ENCODE measurements at regions of chr10 and their contacts with region 1.

Region 1: GRCh38 chr10:97334370-97335175 is at the start of gene FRAT2:
- DNase-seq: peak; percentile 95 to 96
- ATAC-seq: peak; percentile 98
- H3K4me3 ChIP-seq: peak within 1 kb of the TSS; percentile 65 to 82
- H3K27ac ChIP-seq: peak within 1 kb of the TSS in 1 of 2 donors; percentile 70
- H3K4me1 ChIP-seq: no peaks in the 10 kb centered on the region
- H3K27me3 ChIP-seq: no peaks in the 10 kb centered on the region
- total RNA-seq, gene FRAT2: 5.5 to 8.6 TPM

Region 2: DNA sequence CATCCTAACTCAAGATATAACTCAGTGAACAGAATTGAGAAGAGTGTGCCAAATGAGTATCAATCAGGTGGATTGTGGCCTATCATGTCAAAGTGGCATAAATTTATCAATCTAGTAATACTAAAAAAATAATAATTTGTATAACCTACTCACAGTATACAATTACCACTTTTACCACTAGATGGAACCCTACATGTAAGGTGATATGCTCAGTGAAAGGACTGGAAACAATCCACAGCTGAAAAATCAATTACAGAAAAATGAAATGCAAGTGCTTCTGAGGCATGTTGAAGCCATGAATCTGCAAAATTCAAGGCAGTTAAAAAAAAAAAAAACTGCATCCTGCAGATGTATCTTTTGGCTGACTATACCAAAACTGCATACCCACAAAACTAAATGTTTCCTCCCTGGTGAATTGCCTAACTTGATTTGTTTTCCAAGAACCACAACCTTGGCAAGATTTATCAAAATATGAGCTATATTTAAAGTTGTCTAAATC is 56.0 kb before region 1 on chr10:
- intact Hi-C with region 1: loop called (anchors 5 to 10 kb)
- DNase-seq: no peak
- ATAC-seq: peak; percentile 91
- H3K4me3 ChIP-seq: no peak overlapping the region
- H3K27ac ChIP-seq: no peak overlapping the region
- H3K4me1 ChIP-seq: peaks cover 0 to 2% of the 10 kb centered on the region in 2 donors
- H3K27me3 ChIP-seq: no peaks in the 10 kb centered on the region

Region 3: GRCh38 chr10:97292097-97292862 is 42.3 kb before region 1 on chr10 and contains the start of gene ARHGAP19:
- intact Hi-C with region 1: loop called in 1 of 2 experiments (anchors 1 kb)
- DNase-seq: peak; percentile 95 to 97
- ATAC-seq: peak; percentile 100
- H3K4me3 ChIP-seq: peak within 1 kb of the TSS; percentile 67 to 76
- H3K27ac ChIP-seq: peak within 1 kb of the TSS; percentile 87 to 89
- H3K4me1 ChIP-seq: no peaks in the 10 kb centered on the region
- H3K27me3 ChIP-seq: no peaks in the 10 kb centered on the region
- total RNA-seq, gene ARHGAP19: 9.0 to 9.4 TPM

Region 4: DNA sequence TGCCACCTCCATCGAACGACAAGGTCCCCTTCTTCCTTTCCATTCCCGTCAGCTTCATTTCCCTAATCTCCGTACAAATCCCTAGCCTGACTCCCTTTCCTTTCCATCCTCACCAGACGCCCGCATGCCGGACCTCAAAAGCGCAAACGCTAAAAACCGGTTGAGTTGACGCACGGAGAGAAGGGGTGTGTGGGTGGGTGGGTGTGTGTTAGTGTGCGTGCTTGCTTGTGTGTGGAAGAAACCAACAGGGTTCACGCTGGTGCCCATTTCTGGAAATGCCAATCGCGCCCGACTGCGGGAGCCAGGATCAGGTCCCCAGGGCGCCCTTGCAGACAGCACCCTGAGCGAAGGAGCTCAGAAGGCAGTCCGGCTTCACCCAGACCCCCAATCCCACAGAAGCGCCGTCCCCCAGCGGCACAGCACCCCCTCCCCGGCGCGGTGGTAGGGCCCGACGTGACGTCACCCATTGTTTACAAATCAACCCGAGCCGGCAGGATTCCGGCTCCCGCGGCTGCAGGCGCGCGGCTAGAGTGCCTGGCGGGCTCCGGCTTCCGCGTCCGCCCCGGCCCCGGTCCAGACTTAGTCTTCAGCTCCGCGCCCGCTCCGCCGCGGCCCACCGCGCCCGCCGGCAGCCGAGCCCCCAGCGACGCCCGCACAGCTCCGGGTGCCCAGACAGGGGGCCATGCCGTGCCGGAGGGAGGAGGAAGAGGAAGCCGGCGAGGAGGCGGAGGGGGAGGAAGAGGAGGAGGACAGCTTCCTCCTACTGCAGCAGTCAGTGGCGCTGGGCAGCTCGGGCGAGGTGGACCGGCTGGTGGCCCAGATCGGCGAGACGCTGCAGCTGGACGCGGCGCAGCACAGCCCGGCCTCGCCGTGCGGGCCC is 15.6 kb before region 1 on chr10 and contains the start of gene FRAT1:
- intact Hi-C with region 1: loop called in 1 of 2 experiments (anchors 2 kb)
- DNase-seq: peak; percentile 95
- ATAC-seq: peak; percentile 94
- H3K4me3 ChIP-seq: peak within 1 kb of the TSS; percentile 56 to 84
- H3K27ac ChIP-seq: peak within 1 kb of the TSS in 1 of 2 donors; percentile 95
- H3K4me1 ChIP-seq: no peaks in the 10 kb centered on the region
- H3K27me3 ChIP-seq: no peaks in the 10 kb centered on the region
- total RNA-seq, gene FRAT1: 2.4 to 4.5 TPM

Region 5: DNA sequence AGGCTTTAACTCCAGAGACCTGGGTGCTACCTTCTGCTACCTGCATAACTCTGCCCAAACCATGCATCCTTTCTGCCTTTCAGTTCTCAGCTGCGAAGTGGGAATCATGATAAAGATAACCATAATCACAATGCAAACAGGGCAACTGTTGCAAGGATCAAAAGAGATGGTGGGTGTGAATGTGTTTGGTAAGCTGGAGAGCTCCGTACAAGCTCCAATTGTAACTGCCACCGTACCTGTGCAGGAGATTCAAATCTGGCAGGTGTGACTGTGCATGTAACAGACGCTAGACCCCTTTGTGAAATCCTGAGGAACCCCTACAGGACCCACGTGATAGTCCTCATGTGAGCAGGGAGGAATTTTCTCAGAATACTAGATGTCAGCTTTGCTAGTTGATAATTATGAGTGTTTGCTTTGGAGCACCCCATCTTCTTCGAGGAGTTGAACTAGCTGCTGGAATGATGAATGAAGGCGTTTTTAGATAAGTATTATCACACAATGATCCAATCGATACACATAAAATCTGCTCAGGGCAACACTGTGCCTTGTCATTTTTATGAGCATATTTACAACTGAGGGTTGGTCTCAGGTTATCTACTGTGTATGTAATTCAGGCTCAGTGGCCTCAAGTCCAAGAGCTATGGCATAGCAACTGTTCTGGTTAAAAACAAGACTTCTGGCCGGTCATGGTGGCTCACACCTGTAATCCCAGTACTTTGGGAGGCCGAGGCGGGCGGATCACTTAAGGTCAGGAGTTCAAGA is 15.4 kb after region 1 on chr10:
- intact Hi-C with region 1: no loop called
- DNase-seq: no peak
- ATAC-seq: no peak
- H3K4me3 ChIP-seq: no peak overlapping the region
- H3K27ac ChIP-seq: no peak overlapping the region
- H3K4me1 ChIP-seq: no peaks in the 10 kb centered on the region
- H3K27me3 ChIP-seq: no peaks in the 10 kb centered on the region

Region 6: GRCh38 chr10:97388152-97388551 is 53.6 kb after region 1 on chr10:
- intact Hi-C with region 1: no loop called
- DNase-seq: peak in 1 of 2 donors; percentile 70
- ATAC-seq: no peak
- H3K4me3 ChIP-seq: no peak overlapping the region
- H3K27ac ChIP-seq: no peak overlapping the region
- H3K4me1 ChIP-seq: no peaks in the 10 kb centered on the region
- H3K27me3 ChIP-seq: no peaks in the 10 kb centered on the region

Region 7: DNA sequence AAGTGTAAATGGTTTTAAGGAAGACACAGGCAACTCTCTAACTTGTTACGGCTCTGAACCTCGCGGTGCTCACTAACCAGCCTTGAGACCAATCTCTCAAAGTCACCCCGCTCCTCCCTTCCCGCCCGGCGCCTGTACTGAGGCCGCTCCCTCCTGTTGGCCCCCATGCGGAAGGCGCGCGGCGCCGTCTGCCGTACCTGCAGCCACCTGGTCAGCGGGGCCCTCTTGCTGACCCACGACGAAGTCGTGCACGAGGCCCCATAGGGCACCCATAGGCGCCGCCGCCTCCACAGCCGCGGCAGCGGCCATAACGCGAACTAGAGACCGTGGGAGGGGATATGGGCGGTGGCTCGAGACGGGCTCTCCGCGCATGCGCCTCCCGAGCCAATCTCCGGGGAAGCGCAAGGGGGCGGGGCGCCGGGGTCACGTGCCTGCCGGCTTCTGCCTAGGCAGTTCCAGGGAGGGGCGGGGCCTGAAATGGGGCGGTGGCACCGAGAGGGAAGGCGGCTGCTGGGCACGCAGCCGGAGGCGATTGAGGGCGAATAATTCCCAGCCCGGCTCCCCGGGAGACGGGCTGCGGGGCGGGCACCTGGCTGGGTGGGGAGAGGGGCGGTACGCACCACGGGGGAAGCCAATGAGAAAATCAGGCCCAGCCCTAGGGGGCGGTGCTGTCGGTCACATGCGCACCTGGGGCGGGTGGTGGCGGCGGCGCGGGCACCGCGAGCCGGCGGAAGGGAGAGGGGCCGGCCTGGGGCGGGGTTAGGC is 163.7 kb after region 1 on chr10 and contains the start of gene MMS19:
- intact Hi-C with region 1: loop called in 1 of 2 experiments (anchors 5 kb)
- DNase-seq: peak; percentile 100
- ATAC-seq: peak; percentile 98
- H3K4me3 ChIP-seq: peak within 1 kb of the TSS; percentile 65 to 73
- H3K27ac ChIP-seq: peak within 1 kb of the TSS; percentile 36 to 85
- H3K4me1 ChIP-seq: peaks cover under 1 to 7% of the 10 kb centered on the region in 2 donors
- H3K27me3 ChIP-seq: no peaks in the 10 kb centered on the region
- total RNA-seq, gene MMS19: 34.3 to 63.8 TPM

Measured in aorta (tissue), 5 donors.